BJ (cell line): ENCODE measurements at regions of chr10 and their contacts with region 1.

Region 1: DNA sequence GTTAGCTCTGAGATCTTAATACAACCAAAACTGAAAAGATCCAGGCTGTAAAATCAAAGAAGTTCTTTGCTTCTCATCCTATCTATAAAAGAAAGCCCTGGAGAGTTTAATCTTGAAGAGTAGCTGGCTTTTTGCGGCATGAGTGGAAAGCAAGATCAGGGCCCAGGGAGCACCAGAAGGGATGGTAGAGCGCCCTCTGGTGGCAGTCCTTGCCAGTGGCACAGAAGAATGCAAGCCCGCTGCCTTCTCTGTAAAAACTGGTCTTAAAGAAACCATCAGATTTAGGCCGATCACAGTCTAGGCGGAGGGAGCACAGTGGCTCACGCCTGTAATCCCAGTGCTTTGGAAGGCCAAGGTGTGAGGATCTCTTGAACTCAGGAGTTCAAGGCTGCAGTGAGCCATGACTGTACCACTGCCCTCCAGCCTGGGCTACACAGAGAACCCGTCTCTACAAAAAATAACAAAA is 35.6 kb downstream of the CPN1 start:
- DNase-seq: peak; percentile 23
- H3K4me3 ChIP-seq: no peak overlapping the region
- H3K27me3 ChIP-seq: no peaks in the 10 kb centered on the region
- CTCF ChIP-seq: peak; percentile 98

Region 2: DNA sequence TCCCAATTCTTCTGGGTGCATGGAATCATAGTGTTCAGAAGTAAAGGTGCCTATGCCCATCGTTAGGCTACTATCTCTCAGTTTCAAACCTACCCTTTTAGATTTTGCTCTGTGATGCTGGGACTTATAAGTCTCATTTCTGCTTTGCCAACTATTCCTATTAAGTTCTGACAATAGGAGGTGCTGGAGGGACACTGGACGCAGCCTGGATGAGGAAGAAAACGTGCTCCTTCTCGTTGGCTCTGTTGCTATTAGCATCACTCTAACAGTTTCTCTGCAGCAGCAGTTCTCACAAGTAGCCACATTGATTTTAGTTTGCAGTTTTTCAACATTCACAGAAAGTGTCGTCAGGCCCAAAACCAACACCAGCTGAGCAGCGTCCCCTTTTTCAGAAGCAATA is 191.2 kb before region 1 on chr10:
- CTCF ChIA-PET with region 1: interaction called, 199 read pairs
- POLR2A ChIA-PET with region 1: no interaction called
- DNase-seq: peak; percentile 41
- H3K4me3 ChIP-seq: no peak overlapping the region
- H3K27me3 ChIP-seq: no peaks in the 10 kb centered on the region
- CTCF ChIP-seq: peak; percentile 75

Region 3: GRCh38 chr10:99966306-99966705 is 79.7 kb before region 1 on chr10:
- CTCF ChIA-PET with region 1: interaction called, 11 read pairs
- POLR2A ChIA-PET with region 1: no interaction called
- DNase-seq: peak; percentile 62
- H3K4me3 ChIP-seq: no peak overlapping the region
- H3K27me3 ChIP-seq: no peaks in the 10 kb centered on the region
- CTCF ChIP-seq: no peak

Region 4: GRCh38 chr10:99976886-99977665 is 69.0 kb before region 1 on chr10:
- CTCF ChIA-PET with region 1: interaction called, 24 read pairs
- POLR2A ChIA-PET with region 1: no interaction called
- DNase-seq: peak; percentile 89
- H3K4me3 ChIP-seq: no peak overlapping the region
- H3K27me3 ChIP-seq: no peaks in the 10 kb centered on the region
- CTCF ChIP-seq: no peak

Region 5: DNA sequence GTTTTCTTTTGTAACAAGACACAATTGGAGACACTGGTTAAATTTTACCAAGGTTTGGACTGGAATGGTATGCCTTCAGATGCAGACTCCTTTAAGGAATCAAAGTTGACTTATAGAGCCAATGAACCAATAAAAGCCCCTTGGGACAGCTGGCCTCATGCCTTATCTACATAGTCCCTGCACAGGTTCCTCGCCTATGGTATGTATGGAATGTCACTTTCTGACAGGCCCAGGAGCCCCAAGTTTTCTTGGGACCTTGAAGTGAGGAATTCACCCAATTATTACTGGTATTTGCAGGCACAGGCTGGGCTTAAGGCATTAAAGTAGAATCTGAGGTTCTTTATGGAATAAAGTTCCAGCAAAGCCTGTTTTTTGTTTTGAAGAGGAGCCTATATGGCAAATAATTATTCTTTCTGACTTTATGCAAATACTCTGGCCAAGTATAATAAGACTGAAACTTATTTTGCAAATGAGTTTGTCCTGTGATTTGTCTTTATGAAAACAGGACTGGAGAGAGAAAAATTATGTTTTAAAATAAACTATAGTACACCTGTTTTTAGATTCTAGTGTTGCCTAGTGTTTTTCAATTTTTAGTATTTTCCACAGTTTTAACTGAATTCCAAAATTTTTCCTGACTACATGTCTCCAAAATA is 12.2 kb before region 1 on chr10:
- CTCF ChIA-PET with region 1: interaction called, 11 read pairs
- POLR2A ChIA-PET with region 1: no interaction called
- DNase-seq: no peak
- H3K4me3 ChIP-seq: no peak overlapping the region
- H3K27me3 ChIP-seq: no peaks in the 10 kb centered on the region
- CTCF ChIP-seq: no peak

Region 6: DNA sequence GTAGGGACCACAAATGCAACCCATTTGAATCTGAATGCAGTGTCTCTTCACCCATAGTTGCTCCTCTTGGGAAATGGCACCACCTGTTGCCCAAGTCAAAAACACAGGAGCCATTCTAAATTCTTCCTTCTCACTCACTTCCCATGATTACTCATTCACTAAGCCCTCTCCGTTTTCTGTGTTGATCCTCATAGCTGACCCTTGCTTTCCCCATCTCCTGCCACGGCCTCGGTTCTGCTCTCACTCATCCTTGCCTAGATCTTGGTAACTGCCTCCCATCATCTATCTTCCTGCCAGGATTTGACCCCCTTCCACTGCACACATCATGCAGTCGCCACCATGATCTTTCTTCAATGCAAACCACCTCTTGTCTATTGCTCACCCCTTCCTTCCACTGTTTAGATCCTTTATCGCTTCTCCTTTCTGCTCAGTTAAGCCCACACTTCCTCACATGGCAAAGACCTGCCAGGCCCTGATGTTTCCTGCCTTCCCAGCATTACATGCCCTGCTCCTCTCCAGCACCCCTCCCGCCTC is 54.7 kb after region 1 on chr10:
- CTCF ChIA-PET with region 1: no interaction called
- POLR2A ChIA-PET with region 1: no interaction called
- DNase-seq: no peak
- H3K4me3 ChIP-seq: no peak overlapping the region
- H3K27me3 ChIP-seq: no peaks in the 10 kb centered on the region; the same call in 1 of the 2 replicates
- CTCF ChIP-seq: 0 out of 2 replicates have a peak, but pooled peaks have one; percentile 8